Gastrocnemius medialis (tissue), 4 donors: ENCODE measurements at regions of chr11 and their contacts with region 1.

Region 1: DNA sequence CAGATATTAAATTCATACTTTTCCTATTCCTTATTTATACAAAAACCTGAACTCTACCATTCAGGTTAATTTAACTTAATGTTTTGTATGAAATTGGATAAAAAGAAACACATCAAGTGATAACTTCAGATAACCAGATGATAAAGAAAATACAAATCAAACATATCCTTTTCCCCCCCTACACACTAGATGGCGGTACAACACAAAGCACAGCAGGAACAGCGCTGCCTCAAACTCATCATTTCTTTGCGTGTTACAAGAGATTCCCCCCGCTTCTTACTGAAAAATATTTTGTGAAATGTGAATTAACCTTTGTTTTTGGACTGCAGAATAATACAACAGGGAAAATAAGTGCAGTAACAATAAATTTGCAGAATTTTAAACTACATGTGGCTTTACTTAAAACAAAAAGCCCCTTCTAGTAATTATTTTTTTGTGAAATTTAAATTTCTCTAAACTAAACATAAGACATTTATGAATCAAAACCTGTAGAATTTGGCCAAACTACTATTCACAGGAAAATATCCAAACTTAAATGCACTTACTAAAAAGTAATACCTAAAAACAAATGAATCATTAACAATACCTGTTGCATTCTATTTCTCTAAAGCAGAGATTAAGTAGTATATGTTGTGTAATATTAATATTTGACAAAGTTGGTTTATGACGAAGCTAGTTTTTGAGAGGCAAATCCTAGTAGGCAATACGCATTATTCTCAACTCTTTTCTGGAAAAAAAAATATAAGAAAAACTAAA is 74.4 kb downstream of the ARHGAP32 start:
- DNase-seq: no peak
- ATAC-seq: peak in 1 of 2 donors; percentile 66
- H3K4me3 ChIP-seq: no peak overlapping the region
- H3K27ac ChIP-seq: no peak overlapping the region
- H3K4me1 ChIP-seq: no peaks in the 10 kb centered on the region
- H3K27me3 ChIP-seq: no peaks in the 10 kb centered on the region
- CTCF ChIP-seq: peak; percentile 65 to 87 (median 81)
- POLR2A ChIP-seq: no peak

Region 2: GRCh38 chr11:129056873-129057272 is 60.9 kb before region 1 on chr11:
- in situ Hi-C with region 1: no loop called
- intact Hi-C with region 1: no loop called
- DNase-seq: peak in 1 of 2 donors; percentile 9
- ATAC-seq: no peak
- H3K4me3 ChIP-seq: no peak overlapping the region
- H3K27ac ChIP-seq: no peak overlapping the region
- H3K4me1 ChIP-seq: peaks cover 0 to 4% of the 10 kb centered on the region in 2 donors
- H3K27me3 ChIP-seq: no peaks in the 10 kb centered on the region
- CTCF ChIP-seq: no peak
- POLR2A ChIP-seq: no peak

Region 3: GRCh38 chr11:129267716-129268115 is 149.9 kb after region 1 on chr11:
- in situ Hi-C with region 1: no loop called
- intact Hi-C with region 1: no loop called
- DNase-seq: no peak
- ATAC-seq: no peak
- H3K4me3 ChIP-seq: no peak overlapping the region
- H3K27ac ChIP-seq: no peak overlapping the region
- H3K4me1 ChIP-seq: no peaks in the 10 kb centered on the region
- H3K27me3 ChIP-seq: no peaks in the 10 kb centered on the region
- CTCF ChIP-seq: no peak
- POLR2A ChIP-seq: no peak

Region 4: GRCh38 chr11:129323896-129324512 is 206.2 kb after region 1 on chr11:
- in situ Hi-C with region 1: loop called in 2 of 4 experiments (anchors 5 to 25 kb)
- intact Hi-C with region 1: no loop called
- DNase-seq: peak; percentile 26 to 43
- ATAC-seq: peak; percentile 80 to 88
- H3K4me3 ChIP-seq: no peak overlapping the region
- H3K27ac ChIP-seq: peak overlapping the region; percentile 47 to 57 (median 52)
- H3K4me1 ChIP-seq: peaks cover 0 to 2% of the 10 kb centered on the region in 2 donors
- H3K27me3 ChIP-seq: no peaks in the 10 kb centered on the region
- CTCF ChIP-seq: no peak
- POLR2A ChIP-seq: no peak

Region 5: DNA sequence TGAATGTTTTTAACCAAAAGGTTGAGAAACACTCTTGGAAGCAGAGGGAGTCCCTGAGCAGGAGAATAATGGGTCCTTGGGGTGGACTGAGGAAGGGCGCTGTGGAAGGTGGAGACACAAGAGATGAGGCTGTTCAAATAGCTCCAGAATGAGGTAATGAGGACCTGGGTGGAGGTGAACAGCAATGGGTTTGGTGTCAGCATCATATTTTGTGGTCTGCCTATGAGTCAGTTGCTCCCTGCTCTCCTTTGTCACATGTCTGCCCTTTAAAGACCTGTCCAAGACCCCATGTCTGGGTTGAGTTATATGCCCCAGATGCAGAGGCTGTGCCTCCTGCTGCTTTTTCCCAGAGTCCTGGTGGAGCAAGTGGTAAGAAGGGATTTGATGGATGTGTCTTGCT is 371.5 kb after region 1 on chr11:
- in situ Hi-C with region 1: no loop called
- intact Hi-C with region 1: no loop called
- DNase-seq: no peak
- ATAC-seq: no peak
- H3K4me3 ChIP-seq: no peak overlapping the region
- H3K27ac ChIP-seq: no peak overlapping the region
- H3K4me1 ChIP-seq: no peaks in the 10 kb centered on the region
- H3K27me3 ChIP-seq: no peaks in the 10 kb centered on the region
- CTCF ChIP-seq: no peak
- POLR2A ChIP-seq: no peak